ENCODE measurements at regions of chr17 and their contacts with region 1.

Region 1: DNA sequence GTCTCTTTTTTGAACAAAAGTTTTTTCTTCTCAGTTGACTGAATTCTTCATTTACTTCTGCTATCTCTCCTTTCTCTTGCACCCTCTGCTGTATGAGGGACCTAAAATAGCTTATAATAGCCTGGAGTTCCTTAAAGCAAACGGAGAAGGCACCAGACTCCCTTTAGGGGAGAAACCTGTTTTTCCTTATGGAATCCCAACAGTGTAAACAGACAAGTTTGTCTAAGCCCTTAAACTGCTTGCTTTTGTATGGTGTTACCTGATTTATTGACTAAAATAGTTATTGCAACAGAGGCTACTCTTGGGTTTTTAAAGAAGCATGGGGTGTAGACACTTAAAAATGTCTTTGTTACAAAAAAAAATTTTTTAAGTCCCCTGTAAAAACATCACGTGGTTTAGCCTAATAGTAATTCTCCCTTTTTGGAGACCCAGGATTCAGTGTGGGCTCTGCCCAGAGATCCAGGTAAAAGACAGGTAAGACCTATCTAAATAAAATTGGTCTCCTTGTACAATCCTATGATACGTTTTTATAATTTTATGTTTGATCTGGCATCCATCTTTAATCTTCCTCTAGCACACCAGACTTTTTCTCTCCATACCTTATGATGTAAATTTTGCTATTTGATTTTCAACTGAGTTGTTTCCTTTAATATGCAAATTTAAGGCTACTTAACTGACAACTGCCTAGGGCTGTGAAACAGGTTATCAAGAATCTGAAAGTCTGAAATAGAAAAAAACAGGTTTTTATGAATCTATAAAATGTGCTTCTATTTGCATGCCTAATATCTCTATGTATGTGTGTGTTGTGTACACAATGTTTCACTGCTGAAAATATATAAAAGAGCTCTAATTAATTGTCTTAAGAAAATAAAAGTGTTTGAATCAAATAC is 13.1 kb upstream of the TRIM25 start:
- DNase-seq: no peak
- H3K4me3 ChIP-seq: no peak overlapping the region
- H3K27ac ChIP-seq: no peak overlapping the region
- H3K4me1 ChIP-seq: no peaks in the 10 kb centered on the region
- H3K27me3 ChIP-seq: no peaks in the 10 kb centered on the region

Region 2: DNA sequence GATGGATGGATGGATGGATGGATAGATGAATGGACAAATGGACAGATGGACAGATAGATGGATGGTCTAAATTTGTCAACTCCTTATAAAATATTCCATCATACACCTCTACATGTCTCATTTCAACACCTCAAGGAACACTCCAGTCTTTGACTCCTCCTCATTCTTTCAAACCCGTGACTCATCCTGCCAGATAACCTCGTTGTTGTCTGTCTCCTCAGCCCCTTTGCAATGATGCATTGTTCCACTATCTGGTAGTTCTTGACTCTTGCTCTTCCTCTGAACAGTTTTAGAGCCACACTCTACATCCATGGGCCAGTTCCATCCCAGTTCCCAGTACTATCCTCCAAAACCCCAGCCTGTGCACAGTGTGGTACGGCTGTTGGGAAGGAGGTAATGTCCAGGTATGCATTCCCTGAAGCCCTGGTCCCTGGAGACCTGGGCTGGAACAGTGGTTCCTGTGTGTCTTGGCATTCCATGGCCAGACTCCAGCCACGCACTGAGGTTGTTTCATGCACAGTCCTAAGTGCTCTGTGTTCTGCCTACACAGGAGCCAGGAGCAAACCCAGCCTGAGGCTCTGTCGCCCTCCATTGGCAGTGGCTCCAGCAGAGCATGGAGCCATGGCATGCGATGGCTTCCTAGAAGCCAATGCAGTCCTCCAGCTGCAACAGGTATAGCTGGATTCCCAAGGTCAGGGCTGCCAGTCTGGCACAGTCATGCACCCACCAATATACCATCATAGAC is 198.9 kb before region 1 on chr17:
- in situ Hi-C with region 1: no loop called
- DNase-seq: no peak
- H3K4me3 ChIP-seq: no peak overlapping the region
- H3K27ac ChIP-seq: no peak overlapping the region
- H3K4me1 ChIP-seq: no peaks in the 10 kb centered on the region
- H3K27me3 ChIP-seq: no peaks in the 10 kb centered on the region; the same call in 1 of the 2 replicates

Region 3: GRCh38 chr17:56819431-56820145 is 107.4 kb before region 1 on chr17:
- in situ Hi-C with region 1: loop called (anchors 10 kb)
- DNase-seq: peak; percentile 71
- H3K4me3 ChIP-seq: no peak overlapping the region
- H3K27ac ChIP-seq: no peak overlapping the region
- H3K4me1 ChIP-seq: no peaks in the 10 kb centered on the region
- H3K27me3 ChIP-seq: no peaks in the 10 kb centered on the region

Region 4: GRCh38 chr17:57121338-57122042 is 194.5 kb after region 1 on chr17:
- in situ Hi-C with region 1: no loop called
- DNase-seq: peak; percentile 66
- H3K4me3 ChIP-seq: no peak overlapping the region
- H3K27ac ChIP-seq: no peak overlapping the region
- H3K4me1 ChIP-seq: no peaks in the 10 kb centered on the region
- H3K27me3 ChIP-seq: no peaks in the 10 kb centered on the region

Measured in GM23248 (cell line).